Ascending aorta (tissue), 2 donors: ENCODE measurements at regions of chr1 and their contacts with region 1.

Region 1: DNA sequence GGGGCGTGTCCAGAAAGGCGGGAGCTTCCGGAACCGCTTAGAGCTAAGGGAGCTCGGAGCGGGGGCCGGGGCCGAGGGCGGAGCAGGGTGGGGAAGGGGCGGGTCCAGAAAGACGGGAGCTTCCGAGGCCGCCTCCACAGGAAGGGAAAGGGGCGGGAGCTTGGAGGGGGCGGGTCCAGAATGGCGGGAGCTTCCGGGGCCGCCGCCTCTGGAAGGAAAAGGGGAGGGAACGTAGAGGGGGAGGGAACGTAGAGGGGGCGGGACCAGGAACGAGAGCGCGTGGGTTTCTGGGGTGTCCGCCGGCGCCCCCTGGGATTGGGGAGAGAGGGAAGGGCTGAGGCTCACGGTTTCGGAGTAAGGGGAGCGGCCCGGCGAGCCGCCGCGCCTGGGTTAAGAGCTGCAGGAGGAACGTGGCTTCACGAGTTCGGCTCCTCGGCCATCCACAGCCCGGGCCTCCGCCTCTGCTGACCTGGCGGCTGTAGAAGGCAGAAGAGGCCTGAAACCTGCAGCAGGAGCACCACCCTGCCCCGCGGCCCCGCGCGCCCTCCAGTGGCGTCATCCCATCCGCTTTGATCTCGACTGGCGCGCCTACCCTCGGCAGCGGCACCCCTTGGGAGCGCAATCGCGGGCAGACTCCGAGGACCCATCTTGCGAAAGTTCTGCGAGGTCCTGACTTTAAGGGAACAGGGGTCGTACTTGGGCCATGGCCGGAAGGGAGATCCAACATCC is 22.9 kb upstream of the HPDL start:
- DNase-seq: peak; percentile 89 to 99
- H3K4me3 ChIP-seq: peak overlapping the region; percentile 69 to 80
- H3K27ac ChIP-seq: peak overlapping the region; percentile 82 to 88
- H3K4me1 ChIP-seq: peaks cover 0 to 3% of the 10 kb centered on the region in 2 donors
- H3K27me3 ChIP-seq: no peaks in the 10 kb centered on the region
- CTCF ChIP-seq: peak; percentile 52 to 77 (median 65)

Region 2: GRCh38 chr1:44730741-44731512 is 572.8 kb before region 1 on chr1 and contains the start of gene RNU5D-1:
- intact Hi-C with region 1: loop called (anchors 5 kb)
- DNase-seq: peak; percentile 81 to 98
- H3K4me3 ChIP-seq: peak within 1 kb of the TSS in 1 of 2 donors; percentile 31
- H3K27ac ChIP-seq: peak within 1 kb of the TSS; percentile 84 to 92
- H3K4me1 ChIP-seq: peaks cover 5 to 15% of the 10 kb centered on the region in 2 donors
- H3K27me3 ChIP-seq: no peaks in the 10 kb centered on the region
- CTCF ChIP-seq: peak; percentile 70 to 76 (median 72)
- total RNA-seq, gene RNU5D-1: not detected

Region 3: DNA sequence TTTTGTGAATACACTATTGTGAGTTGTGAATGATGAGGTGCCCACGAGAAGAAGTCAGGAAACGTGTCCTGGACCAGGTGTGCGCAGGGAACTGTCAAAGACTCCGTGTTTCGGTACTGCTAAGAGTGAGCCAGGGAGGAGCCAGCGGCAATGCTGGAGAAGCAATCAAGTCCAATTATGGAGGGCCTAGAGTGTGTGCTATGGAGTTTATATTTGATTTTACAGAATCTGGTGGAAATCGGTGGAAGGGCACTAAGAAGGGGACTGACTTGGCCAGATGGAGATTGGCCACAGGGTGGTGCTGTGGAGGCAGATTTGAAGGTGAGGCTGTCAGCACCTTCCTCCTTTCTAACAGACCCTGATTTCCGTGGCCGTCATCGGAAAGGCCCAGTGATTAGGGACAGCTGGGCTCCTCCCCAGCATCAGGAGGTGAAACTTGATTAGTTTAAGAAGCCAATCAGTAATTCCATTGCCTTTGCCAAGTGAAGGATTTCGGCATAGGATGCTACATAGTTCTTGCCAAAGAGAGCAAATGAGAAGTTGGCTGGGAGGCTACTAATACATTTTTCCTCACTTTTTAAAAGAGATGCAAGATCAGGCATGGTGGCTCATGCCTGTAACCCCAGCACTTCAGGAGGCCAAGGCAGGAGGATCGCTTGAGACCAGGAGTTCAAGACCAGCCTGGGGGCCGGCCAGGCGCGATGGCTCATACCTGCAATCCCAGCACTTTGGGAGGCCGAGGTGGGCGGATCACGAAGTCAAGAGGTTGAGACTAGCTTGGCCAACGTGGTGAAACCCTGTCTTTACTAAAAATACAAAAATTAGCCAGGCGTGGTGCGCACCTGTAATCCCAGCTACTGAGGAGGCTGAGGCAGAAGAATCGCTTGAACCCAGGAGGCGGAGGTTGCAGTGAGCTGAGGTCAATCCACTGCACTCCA is 467.7 kb before region 1 on chr1:
- intact Hi-C with region 1: loop called (anchors 5 kb)
- DNase-seq: peak in 1 of 2 donors; percentile 91
- H3K4me3 ChIP-seq: no peak overlapping the region
- H3K27ac ChIP-seq: no peak overlapping the region
- H3K4me1 ChIP-seq: no peaks in the 10 kb centered on the region
- H3K27me3 ChIP-seq: no peaks in the 10 kb centered on the region
- CTCF ChIP-seq: peak; percentile 73 to 80 (median 75)

Region 4: GRCh38 chr1:45059829-45060228 is 243.9 kb before region 1 on chr1:
- intact Hi-C with region 1: no loop called
- DNase-seq: no peak
- H3K4me3 ChIP-seq: no peak overlapping the region
- H3K27ac ChIP-seq: no peak overlapping the region
- H3K4me1 ChIP-seq: no peaks in the 10 kb centered on the region
- H3K27me3 ChIP-seq: no peaks in the 10 kb centered on the region
- CTCF ChIP-seq: no peak

Region 5: DNA sequence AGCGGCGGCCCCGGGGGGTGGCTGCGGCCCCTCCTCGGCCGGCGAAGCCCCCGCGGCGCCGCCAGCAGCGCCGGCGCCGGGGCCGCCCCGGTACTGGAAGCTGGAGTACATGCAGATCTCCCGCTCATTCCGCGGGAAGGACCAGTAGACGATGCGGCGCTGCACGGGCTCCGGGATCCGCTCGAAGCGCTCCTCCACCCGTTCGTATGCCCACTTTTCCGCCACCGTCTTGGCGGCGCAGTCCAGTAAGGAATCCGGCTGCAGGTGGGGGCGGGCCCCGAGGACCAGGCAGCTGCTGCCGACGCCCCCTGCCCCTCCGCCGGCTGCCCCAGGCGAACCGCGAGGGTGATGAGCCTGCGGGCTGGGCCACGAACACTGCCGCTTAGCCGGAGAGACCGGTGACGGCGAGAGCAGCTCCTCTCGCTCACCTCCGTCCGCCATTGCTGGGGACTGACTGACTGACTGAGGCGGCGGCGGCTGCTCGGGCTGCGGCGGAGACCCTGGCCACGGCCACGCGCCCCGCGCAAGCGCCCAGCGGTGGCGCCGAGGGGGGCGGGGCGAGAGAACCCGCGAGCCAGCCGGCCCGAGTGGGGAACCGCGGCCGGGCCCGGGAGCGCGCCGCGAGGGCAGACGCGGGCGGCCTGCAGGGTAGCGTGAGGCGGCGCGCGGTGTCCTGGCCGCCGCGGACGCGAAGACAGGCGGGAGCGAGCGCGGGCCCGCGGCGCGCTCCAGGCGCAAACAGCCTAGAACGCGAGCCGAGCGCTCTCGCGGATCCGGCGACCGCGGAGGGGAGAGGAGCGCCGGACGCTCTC is 97.6 kb before region 1 on chr1 and contains the start of gene ZSWIM5:
- intact Hi-C with region 1: loop called (anchors 5 kb)
- DNase-seq: peak in 1 of 2 donors; percentile 76
- H3K4me3 ChIP-seq: peak within 1 kb of the TSS; percentile 71 to 95
- H3K27ac ChIP-seq: peak within 1 kb of the TSS; percentile 73 to 82
- H3K4me1 ChIP-seq: peaks cover 0 to 7% of the 10 kb centered on the region in 2 donors
- H3K27me3 ChIP-seq: no peaks in the 10 kb centered on the region
- CTCF ChIP-seq: no peak
- total RNA-seq, gene ZSWIM5: 1.2 TPM

Region 6: GRCh38 chr1:46569884-46570725 is 1266.4 kb after region 1 on chr1:
- intact Hi-C with region 1: no loop called
- DNase-seq: no peak
- H3K4me3 ChIP-seq: no peak overlapping the region
- H3K27ac ChIP-seq: no peak overlapping the region
- H3K4me1 ChIP-seq: peaks cover 3 to 5% of the 10 kb centered on the region in 2 donors
- H3K27me3 ChIP-seq: no peaks in the 10 kb centered on the region
- CTCF ChIP-seq: no peak